ENCODE measurements at regions of chr4 and their contacts with region 1.

Region 1: DNA sequence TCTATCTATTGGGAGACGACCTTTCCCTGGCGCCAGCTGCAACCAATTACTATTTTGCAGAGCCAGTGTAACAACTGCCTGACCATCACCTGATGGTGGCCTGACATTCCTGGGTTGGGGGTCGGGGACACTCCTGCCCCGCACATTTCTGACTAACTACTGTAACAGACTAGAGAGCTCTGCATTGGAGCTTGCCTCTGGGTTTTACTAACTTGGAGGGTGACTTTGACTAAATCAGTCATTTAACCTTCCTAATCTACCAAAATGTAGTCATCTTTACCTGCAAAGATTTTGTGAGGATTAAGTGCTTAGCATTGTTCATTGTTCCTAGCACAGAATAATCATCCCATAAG is 37.5 kb upstream of the ABCG2 start:
- DNase-seq: no peak
- ATAC-seq: peak; percentile 58
- H3K4me3 Mint-ChIP-seq: no peak overlapping the region
- H3K27ac Mint-ChIP-seq: no peak overlapping the region
- H3K4me1 Mint-ChIP-seq: peaks cover 2% of the 10 kb centered on the region
- H3K27me3 Mint-ChIP-seq: no peaks in the 10 kb centered on the region

Region 2: DNA sequence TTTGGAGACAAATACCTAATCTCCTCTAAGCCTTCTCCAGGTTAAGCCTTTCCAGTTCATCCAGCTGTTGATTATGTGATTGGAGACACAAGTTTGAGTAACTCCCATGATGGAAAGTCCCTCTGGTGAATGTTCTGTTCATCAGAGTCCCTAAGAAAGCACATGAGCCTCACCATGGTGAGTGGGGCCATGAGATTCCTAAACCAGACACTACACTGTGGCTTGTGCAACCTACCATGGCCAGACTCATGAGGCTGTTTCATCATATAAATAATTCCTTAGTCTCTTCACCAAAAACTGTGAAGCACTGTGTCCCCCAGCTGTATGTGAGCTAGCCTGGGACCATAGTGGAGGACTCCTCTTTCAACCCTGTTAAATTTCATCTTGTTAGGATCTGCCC is 174.2 kb before region 1 on chr4:
- CTCF ChIA-PET with region 1: no interaction called
- POLR2A ChIA-PET with region 1: no interaction called
- intact Hi-C with region 1: no loop called
- DNase-seq: no peak
- ATAC-seq: no peak
- H3K4me3 Mint-ChIP-seq: no peak overlapping the region
- H3K27ac Mint-ChIP-seq: no peak overlapping the region
- H3K4me1 Mint-ChIP-seq: no peaks in the 10 kb centered on the region
- H3K27me3 Mint-ChIP-seq: no peaks in the 10 kb centered on the region

Region 3: DNA sequence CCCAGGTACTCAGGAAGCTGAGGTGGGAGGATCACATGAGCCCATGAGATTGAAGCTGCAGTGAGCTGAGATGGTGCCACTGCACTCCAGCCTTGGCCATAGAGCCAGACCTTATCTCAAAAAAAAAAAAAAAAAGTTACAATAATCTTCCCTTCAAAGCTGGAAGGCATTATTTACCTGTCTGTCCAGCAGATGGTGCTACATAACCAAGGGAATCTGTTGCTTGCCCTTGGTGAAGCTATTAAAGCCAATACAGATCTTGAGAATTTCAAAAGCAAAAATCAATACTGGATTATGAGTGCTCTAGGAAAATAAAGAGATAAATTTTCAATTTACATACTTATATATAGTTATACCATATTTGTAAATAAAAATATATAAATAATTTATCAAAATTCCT is 162.7 kb before region 1 on chr4:
- CTCF ChIA-PET with region 1: interaction called, 11 read pairs
- POLR2A ChIA-PET with region 1: no interaction called
- intact Hi-C with region 1: no loop called
- DNase-seq: peak; percentile 44
- ATAC-seq: peak; percentile 64
- H3K4me3 Mint-ChIP-seq: no peak overlapping the region
- H3K27ac Mint-ChIP-seq: no peak overlapping the region
- H3K4me1 Mint-ChIP-seq: peaks cover 6% of the 10 kb centered on the region
- H3K27me3 Mint-ChIP-seq: no peaks in the 10 kb centered on the region

Region 4: GRCh38 chr4:88158489-88159243 is 37.3 kb before region 1 on chr4 and contains the start of gene ABCG2:
- CTCF ChIA-PET with region 1: no interaction called
- POLR2A ChIA-PET with region 1: no interaction called
- intact Hi-C with region 1: loop called in 1 of 2 experiments (anchors 2 kb)
- DNase-seq: peak; percentile 63
- ATAC-seq: peak; percentile 75
- H3K4me3 Mint-ChIP-seq: peak within 1 kb of the TSS; percentile 76
- H3K27ac Mint-ChIP-seq: peak within 1 kb of the TSS; percentile 81
- H3K4me1 Mint-ChIP-seq: peaks cover 18% of the 10 kb centered on the region
- H3K27me3 Mint-ChIP-seq: peaks cover 27% of the 10 kb centered on the region
- total RNA-seq, gene ABCG2: 0.33 to 0.39 TPM

Region 5: GRCh38 chr4:88185906-88186305 is 10.1 kb before region 1 on chr4:
- CTCF ChIA-PET with region 1: no interaction called
- POLR2A ChIA-PET with region 1: no interaction called
- intact Hi-C with region 1: no loop called
- DNase-seq: no peak
- ATAC-seq: no peak
- H3K4me3 Mint-ChIP-seq: no peak overlapping the region
- H3K27ac Mint-ChIP-seq: no peak overlapping the region
- H3K4me1 Mint-ChIP-seq: peaks cover 11% of the 10 kb centered on the region
- H3K27me3 Mint-ChIP-seq: no peaks in the 10 kb centered on the region

Measured in activated CD4-positive, alpha-beta T cell treated with anti-CD3 and anti-CD28 coated beads for 36 hours (primary cell).